ENCODE measurements at regions of chr1 and their contacts with region 1.

Region 1: DNA sequence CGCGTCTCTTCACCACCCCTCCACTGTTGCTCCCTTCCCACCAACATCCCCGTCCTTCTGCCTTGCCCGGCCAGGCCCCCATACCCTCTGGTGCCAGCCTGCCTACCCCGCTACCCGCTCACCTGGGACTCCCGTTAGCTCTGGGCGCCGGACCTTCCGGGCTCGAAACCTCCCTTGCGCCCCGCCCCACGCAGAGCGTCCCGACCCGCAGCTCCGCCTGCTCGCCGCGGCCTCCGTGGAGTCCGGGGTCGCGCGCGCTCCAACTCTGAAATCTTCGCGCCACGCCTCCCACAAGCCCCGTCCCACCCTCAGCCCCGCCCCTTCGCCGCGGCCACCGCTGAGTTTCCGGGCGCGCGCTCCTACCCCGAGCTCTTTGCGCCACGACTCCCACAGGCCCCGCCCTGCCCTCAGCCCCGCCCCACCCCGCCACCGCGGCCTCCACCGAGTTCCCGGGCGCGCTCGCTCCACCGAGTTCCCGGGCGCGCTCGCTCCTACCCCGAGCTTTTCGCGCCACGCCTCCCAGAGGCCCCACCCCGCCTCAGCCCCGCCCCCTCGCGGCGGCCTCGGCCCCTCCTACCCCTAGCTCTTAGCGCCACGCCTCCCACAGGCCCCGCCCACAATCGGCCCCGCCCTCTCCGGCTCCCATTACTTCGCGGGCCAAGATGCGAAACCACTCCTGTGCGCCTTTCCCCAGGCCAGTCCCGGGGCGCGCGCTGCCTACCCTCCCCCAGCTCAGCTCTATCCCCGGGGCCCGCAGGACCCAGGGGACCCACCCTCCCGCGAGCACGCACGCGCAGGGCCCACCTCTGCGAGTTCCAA is at the start of gene IFT25:
- DNase-seq: peak; percentile 93
- ATAC-seq: peak; percentile 89
- H3K4me3 ChIP-seq: peak within 1 kb of the TSS; percentile 100
- H3K27ac ChIP-seq: peak within 1 kb of the TSS; percentile 98
- H3K4me1 ChIP-seq: peaks cover 10% of the 10 kb centered on the region
- H3K27me3 ChIP-seq: no peaks in the 10 kb centered on the region
- CTCF ChIP-seq: no peak
- POLR2A ChIP-seq: peak; percentile 47
- RAD21 ChIP-seq: no peak; the same call in 1 of the 2 replicates
- total RNA-seq, gene IFT25: 9.1 and 30.0 TPM in 2 replicates

Region 2: DNA sequence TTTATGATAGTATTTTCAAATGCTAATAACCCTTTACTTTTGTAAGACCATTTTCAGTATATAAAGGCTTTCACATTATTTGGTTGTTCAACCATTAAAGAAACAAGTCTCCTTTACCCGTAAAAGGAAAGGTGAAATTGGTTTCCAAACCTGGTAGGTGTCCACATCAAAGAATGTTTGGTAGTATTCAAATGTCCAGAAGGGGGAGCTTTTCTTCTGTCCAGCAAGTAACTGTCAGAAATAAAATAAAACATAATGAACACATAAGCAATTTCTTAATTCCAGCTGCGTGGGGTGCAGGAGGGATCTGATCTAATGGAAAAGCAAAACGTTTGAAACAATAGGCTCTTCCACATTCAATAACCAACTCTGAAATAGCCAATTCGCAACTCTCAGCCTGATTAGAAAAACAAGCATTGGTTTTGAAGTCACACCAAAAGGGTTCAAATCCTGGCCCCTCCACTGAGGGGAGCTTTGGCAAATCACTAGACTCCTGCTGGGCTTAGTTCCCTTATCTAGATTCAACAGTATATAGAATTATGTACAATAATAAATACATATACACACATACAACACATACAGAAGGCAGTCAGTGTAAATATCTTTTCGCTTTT is 67.0 kb before region 1 on chr1:
- CTCF ChIA-PET with region 1: interaction called, 12 read pairs
- POLR2A ChIA-PET with region 1: no interaction called
- dilution Hi-C with region 1: no loop called
- in situ Hi-C with region 1: loop called (anchors 5 kb)
- intact Hi-C with region 1: loop called (anchors 1 kb)
- DNase-seq: peak; percentile 69
- ATAC-seq: peak; percentile 65
- H3K4me3 ChIP-seq: no peak overlapping the region
- H3K27ac ChIP-seq: no peak overlapping the region
- H3K4me1 ChIP-seq: no peaks in the 10 kb centered on the region
- H3K27me3 ChIP-seq: no peaks in the 10 kb centered on the region
- CTCF ChIP-seq: peak; percentile 67
- POLR2A ChIP-seq: no peak
- RAD21 ChIP-seq: peak; percentile 72

Region 3: GRCh38 chr1:53889304-53890298 is 56.0 kb before region 1 on chr1 and contains the start of gene YIPF1:
- CTCF ChIA-PET with region 1: no interaction called
- POLR2A ChIA-PET with region 1: interaction called, 4 read pairs
- dilution Hi-C with region 1: no loop called
- in situ Hi-C with region 1: loop called (anchors 5 kb)
- intact Hi-C with region 1: loop called (anchors 2 kb)
- DNase-seq: peak; percentile 87
- ATAC-seq: peak; percentile 100
- H3K4me3 ChIP-seq: peak within 1 kb of the TSS; percentile 97
- H3K27ac ChIP-seq: peak within 1 kb of the TSS; percentile 75
- H3K4me1 ChIP-seq: peaks cover 3% of the 10 kb centered on the region
- H3K27me3 ChIP-seq: no peaks in the 10 kb centered on the region
- CTCF ChIP-seq: no peak
- POLR2A ChIP-seq: no peak
- RAD21 ChIP-seq: no peak; the same call in 1 of the 2 replicates
- total RNA-seq, gene YIPF1: 28.9 and 35.3 TPM in 2 replicates

Measured in IMR-90 (cell line).